ENCODE measurements at regions of chr19 and their contacts with region 1.

Region 1: GRCh38 chr19:3665681-3666544 is 34.4 kb downstream of the PIP5K1C start:
- DNase-seq: peak; percentile 55
- H3K4me3 ChIP-seq: peak overlapping the region; percentile 58
- H3K27ac ChIP-seq: peak overlapping the region; percentile 68
- H3K4me1 ChIP-seq: peaks cover 25% of the 10 kb centered on the region
- CTCF ChIP-seq: peak; percentile 88

Region 2: GRCh38 chr19:3505598-3506383 is 160.1 kb before region 1 on chr19 and contains the start of gene FZR1:
- CTCF ChIA-PET with region 1: no interaction called
- POLR2A ChIA-PET with region 1: no interaction called
- intact Hi-C with region 1: no loop called
- DNase-seq: peak; percentile 99
- H3K4me3 ChIP-seq: peak within 1 kb of the TSS; percentile 100
- H3K27ac ChIP-seq: peak within 1 kb of the TSS; percentile 79
- H3K4me1 ChIP-seq: peaks cover 25% of the 10 kb centered on the region
- CTCF ChIP-seq: no peak
- total RNA-seq, gene FZR1: 39.8 and 61.2 TPM in 2 replicates

Region 3: GRCh38 chr19:3687774-3688706 is 22.1 kb after region 1 on chr19:
- CTCF ChIA-PET with region 1: no interaction called
- POLR2A ChIA-PET with region 1: no interaction called
- intact Hi-C with region 1: no loop called
- DNase-seq: peak; percentile 31
- H3K4me3 ChIP-seq: no peak overlapping the region
- H3K27ac ChIP-seq: no peak overlapping the region
- H3K4me1 ChIP-seq: peaks cover 13% of the 10 kb centered on the region
- CTCF ChIP-seq: no peak

Region 4: GRCh38 chr19:3700221-3701032 is 34.5 kb after region 1 on chr19 and contains the start of gene PIP5K1C:
- CTCF ChIA-PET with region 1: no interaction called
- POLR2A ChIA-PET with region 1: no interaction called
- intact Hi-C with region 1: loop called (anchors 1 kb)
- DNase-seq: peak; percentile 91
- H3K4me3 ChIP-seq: peak within 1 kb of the TSS; percentile 75
- H3K27ac ChIP-seq: no peak within 1 kb of the TSS
- H3K4me1 ChIP-seq: peaks cover 7% of the 10 kb centered on the region
- CTCF ChIP-seq: peak; percentile 71
- total RNA-seq, gene PIP5K1C: 6.3 and 7.6 TPM in 2 replicates